Activated CD4-positive, alpha-beta T cell treated with anti-CD3 and anti-CD28 coated beads for 36 hours (primary cell): ENCODE measurements at regions of chr1 and their contacts with region 1.

Region 1: DNA sequence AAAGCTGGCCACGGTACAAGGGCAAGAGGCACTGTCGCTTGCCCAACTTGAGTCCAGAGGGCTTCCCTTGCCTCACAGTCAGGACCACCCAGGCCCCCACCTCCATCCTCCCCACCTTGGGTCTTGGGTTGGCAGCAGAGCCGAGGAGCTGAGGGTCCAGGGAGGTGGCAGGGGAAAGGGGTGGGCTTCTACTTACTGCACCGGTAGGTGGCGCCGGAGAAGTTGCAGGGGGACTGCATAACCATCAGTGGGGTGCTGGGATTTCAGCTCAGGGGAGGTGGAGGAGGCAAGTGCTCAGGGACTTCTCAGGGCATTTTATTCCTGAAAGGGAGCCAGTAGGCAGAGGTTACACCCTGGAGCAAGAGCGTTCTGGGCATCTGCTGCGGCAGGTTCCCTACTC is 44.0 kb downstream of the TRIM62 start:
- DNase-seq: peak; percentile 59
- ATAC-seq: peak; percentile 33
- H3K4me3 Mint-ChIP-seq: no peak overlapping the region
- H3K27ac Mint-ChIP-seq: no peak overlapping the region
- H3K4me1 Mint-ChIP-seq: peaks cover 4% of the 10 kb centered on the region
- H3K27me3 Mint-ChIP-seq: no peaks in the 10 kb centered on the region

Region 2: DNA sequence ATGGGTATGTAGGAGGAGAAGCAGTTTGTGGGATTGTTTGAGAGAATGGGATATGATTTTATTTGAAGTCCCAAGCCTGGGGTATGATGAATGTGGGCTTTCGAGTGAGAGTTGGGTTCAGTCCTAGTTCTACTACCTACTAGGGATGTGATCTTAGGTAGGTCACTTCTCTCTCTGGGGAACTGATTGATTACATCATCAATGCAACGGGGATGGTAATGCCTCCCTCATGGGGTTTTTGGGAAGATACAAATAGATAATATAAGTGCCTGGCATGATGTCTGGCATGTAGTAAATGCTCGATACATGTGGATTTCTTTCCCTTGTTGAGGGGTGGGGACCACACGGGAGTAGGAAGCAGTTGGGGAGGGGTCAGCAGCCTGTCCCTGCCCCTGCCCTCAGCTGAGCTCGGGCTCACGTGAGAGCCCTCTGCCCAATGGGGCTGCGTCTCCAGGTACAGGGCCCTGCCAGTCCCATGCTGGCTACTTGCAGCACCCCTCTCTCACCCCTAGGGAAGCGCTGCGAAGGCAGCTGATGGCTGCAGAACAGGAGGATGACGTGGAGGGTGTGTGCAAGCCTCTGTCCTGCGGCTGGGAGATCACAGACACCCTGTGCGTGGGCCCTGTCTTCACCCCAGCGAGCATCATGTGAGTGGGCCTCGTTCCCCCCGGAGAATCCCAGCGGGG is 18.1 kb before region 1 on chr1:
- CTCF ChIA-PET with region 1: interaction called, 3 read pairs
- POLR2A ChIA-PET with region 1: no interaction called
- intact Hi-C with region 1: loop called in 1 of 2 experiments (anchors 1 kb)
- DNase-seq: no peak
- ATAC-seq: no peak
- H3K4me3 Mint-ChIP-seq: no peak overlapping the region
- H3K27ac Mint-ChIP-seq: no peak overlapping the region
- H3K4me1 Mint-ChIP-seq: no peaks in the 10 kb centered on the region
- H3K27me3 Mint-ChIP-seq: no peaks in the 10 kb centered on the region